ENCODE measurements at regions of chr5 and their contacts with region 1.

Region 1: DNA sequence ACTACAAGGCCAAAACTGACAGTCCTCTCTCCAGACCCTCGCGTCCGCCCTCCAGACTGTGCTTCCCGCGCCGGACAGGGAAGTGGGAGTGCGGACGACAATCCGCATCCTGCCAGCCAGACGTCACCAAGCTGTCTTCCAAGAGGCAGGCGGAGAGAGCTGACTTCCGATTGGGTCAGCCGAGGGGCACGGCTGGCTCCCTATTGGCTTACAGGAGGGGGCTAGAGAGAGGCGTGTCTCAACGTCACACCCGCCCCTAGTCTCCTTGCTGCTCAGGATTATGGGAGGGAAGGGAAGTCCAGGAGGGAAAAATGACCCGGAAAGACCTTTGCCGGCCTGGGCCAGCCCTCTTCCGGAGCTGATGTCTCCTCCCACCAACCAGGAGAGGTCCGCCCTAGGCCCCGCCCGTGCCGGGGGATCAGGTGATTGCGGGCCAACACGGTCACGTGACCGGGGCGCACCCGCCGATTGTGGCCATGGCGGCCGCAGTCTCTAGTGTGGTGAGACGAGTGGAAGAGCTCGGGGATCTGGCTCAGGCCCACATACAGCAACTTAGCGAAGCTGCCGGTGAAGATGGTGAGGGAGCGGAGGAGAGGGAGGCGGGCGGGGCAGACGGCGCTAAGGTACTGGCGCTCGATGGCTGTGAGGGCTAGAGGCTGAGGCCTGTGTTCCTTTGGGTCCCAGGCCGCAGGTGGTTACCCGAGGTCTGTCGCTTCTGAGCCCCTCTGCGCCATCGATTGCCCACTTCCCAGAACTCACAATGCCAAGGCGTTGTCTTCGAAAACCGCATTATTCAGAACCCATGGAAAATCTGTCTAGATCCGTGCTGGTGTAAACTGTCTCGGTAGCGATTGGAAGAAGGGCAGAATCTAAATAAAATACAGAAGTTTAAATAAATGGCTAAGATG is at the start of gene RIMOC1:
- DNase-seq: peak; percentile 98 to 99
- ATAC-seq: peak; percentile 98 to 99
- H3K4me3 ChIP-seq: peak within 1 kb of the TSS; percentile 80 to 88 (median 84)
- H3K27ac ChIP-seq: peak within 1 kb of the TSS; percentile 89 to 95 (median 93)
- H3K4me1 ChIP-seq: peaks cover 27 to 46% of the 10 kb centered on the region in 2 donors
- H3K27me3 ChIP-seq: no peaks in the 10 kb centered on the region
- CTCF ChIP-seq: peak in 2 of 5 experiments; percentile 50 to 59
- POLR2A ChIP-seq: peak; percentile 85 to 95
- total RNA-seq, gene RIMOC1: 5.0 to 8.2 (median 6.2) TPM

Region 2: DNA sequence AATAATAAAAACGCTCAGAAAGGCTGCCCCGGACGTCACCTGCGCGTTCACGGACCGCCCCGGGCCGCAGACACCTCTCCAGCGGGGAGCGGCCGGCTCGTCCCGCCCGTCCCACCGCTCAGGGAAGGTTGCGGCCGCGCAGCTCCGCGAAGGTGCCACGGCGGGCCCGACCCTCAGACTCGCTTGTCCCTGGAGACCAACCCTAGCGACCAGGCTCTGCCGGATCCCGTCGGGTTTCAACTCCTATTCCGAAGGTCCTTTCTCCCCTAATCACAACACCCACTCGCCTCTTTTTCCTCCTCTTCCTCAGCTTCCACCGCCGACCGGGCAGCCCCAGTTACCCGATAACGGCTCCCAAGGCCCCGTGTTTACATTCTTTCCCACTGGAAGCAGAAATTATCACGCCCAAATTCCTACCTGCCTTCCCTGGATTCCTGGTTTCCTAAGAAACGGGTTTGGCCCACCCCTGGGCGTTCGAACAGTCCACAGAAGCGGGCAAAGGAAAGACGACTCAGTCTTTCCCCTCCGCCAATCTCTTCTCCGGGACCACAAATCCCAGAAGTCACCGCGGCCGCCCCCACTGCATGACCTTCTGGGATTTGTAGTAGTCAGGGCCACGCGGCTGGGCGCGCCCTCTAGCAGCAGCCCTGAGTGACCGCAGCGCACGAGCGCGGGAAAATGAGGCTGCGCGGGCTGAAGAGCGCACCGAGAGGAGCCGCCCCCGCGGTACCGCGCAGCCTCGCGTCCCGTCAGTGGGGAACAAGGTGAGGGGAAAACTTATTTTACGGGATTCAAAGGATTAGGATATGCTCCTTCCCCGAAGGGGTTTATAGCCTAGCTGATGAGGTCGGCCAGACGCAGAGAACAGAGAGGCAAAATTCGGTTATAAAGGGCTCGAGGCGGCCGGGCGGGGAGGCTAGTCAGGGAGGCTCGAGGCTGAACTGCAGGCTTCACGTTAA is 1148.5 kb before region 1 on chr5 and contains the start of gene TTC33:
- in situ Hi-C with region 1: no loop called
- intact Hi-C with region 1: loop called (anchors 1 kb)
- DNase-seq: peak; percentile 94
- ATAC-seq: peak; percentile 96
- H3K4me3 ChIP-seq: peak within 1 kb of the TSS; percentile 82 to 98 (median 85)
- H3K27ac ChIP-seq: peak within 1 kb of the TSS; percentile 91 to 95 (median 92)
- H3K4me1 ChIP-seq: peaks cover 10% of the 10 kb centered on the region in 2 donors
- H3K27me3 ChIP-seq: no peaks in the 10 kb centered on the region
- CTCF ChIP-seq: peak; percentile 25 to 75 (median 60)
- POLR2A ChIP-seq: peak; percentile 61
- total RNA-seq, gene TTC33: 20.2 to 49.0 (median 32.6) TPM

Region 3: DNA sequence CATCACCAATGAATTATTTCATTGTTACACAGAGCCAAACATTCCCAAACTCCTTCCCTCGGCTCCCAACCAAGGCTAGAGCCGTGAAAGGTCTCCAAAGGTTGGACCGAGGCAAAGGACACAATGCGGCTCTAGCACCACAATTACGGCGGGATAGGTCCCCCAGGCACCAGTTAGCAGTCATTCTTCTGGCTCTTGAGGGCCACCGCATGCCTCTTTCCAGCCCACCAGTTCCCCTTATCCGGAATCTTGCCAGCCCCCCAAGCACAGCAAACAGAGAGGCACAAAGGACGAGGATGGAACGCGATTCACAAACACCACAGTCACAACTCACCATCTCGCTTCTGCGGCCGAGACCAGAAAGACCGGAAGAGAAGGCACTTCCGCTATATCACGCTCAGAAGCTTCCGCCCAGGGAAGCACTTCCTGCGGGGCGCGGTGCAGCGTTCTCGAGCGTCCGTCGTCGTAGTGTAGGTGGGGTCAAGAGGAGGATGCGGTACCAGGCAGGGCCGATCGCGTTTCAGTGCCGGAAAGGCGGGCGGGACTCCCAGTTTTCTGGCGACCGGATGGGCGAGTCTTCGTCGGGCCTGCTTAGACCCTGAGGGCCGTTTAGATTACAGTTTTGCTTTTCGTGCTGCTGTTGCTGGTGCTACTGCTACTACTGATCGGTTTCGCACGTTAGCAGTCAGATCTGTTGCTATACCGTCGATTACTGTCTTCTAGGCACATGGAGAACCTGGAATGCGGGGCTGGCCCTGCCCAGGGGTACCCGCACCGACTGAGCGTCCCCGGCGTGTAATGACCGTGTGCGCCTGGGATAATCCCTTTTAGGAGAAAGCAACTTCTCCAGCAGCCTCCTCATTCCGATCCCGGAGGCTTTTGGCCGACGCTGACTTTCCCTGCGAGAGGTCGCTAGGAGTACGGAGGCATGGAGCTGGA is 1069.0 kb before region 1 on chr5 and contains the start of gene RPL37:
- in situ Hi-C with region 1: no loop called
- intact Hi-C with region 1: loop called (anchors 10 kb)
- DNase-seq: peak; percentile 95 to 96
- ATAC-seq: peak; percentile 98 to 99
- H3K4me3 ChIP-seq: peak within 1 kb of the TSS; percentile 73 to 95 (median 82)
- H3K27ac ChIP-seq: peak within 1 kb of the TSS; percentile 85 to 97 (median 94)
- H3K4me1 ChIP-seq: peaks cover 27% of the 10 kb centered on the region in 2 donors
- H3K27me3 ChIP-seq: no peaks in the 10 kb centered on the region
- CTCF ChIP-seq: peak in 1 of 5 experiments; percentile 8
- POLR2A ChIP-seq: peak; percentile 87 to 89
- total RNA-seq, gene RPL37: 42.4 to 155 (median 92.9) TPM

Region 4: GRCh38 chr5:41083306-41083705 is 820.8 kb before region 1 on chr5:
- in situ Hi-C with region 1: no loop called
- intact Hi-C with region 1: no loop called
- DNase-seq: no peak
- ATAC-seq: no peak
- H3K4me3 ChIP-seq: no peak overlapping the region
- H3K27ac ChIP-seq: no peak overlapping the region
- H3K4me1 ChIP-seq: no peaks in the 10 kb centered on the region
- H3K27me3 ChIP-seq: no peaks in the 10 kb centered on the region
- CTCF ChIP-seq: no peak
- POLR2A ChIP-seq: no peak

Region 5: DNA sequence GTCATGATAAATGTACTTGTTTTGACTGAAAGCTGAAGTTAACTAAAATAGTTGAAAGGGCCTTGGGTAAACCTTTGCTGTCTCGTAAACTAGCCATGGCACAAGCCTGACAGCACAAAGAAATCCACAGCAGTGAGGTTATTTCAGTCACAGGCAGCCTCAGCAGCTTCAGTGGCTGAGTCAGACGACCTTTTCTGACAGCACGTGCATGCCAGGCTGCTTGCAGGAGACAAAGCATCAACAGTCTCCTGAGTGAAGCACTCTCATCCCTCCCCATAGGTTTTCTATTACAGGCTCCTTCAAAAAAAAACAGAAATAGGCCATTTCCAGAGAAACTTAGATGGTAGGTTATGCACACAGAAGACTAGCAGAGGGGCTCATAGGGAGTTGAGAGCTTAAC is 68.5 kb before region 1 on chr5:
- in situ Hi-C with region 1: no loop called
- intact Hi-C with region 1: loop called (anchors 1 kb)
- DNase-seq: peak; percentile 72 to 81
- ATAC-seq: peak; percentile 99 to 100
- H3K4me3 ChIP-seq: no peak overlapping the region
- H3K27ac ChIP-seq: peak overlapping the region; percentile 70 to 86 (median 74)
- H3K4me1 ChIP-seq: peaks cover 11 to 13% of the 10 kb centered on the region in 2 donors
- H3K27me3 ChIP-seq: no peaks in the 10 kb centered on the region
- CTCF ChIP-seq: no peak
- POLR2A ChIP-seq: peak in 1 of 2 donors; percentile 22

Region 6: DNA sequence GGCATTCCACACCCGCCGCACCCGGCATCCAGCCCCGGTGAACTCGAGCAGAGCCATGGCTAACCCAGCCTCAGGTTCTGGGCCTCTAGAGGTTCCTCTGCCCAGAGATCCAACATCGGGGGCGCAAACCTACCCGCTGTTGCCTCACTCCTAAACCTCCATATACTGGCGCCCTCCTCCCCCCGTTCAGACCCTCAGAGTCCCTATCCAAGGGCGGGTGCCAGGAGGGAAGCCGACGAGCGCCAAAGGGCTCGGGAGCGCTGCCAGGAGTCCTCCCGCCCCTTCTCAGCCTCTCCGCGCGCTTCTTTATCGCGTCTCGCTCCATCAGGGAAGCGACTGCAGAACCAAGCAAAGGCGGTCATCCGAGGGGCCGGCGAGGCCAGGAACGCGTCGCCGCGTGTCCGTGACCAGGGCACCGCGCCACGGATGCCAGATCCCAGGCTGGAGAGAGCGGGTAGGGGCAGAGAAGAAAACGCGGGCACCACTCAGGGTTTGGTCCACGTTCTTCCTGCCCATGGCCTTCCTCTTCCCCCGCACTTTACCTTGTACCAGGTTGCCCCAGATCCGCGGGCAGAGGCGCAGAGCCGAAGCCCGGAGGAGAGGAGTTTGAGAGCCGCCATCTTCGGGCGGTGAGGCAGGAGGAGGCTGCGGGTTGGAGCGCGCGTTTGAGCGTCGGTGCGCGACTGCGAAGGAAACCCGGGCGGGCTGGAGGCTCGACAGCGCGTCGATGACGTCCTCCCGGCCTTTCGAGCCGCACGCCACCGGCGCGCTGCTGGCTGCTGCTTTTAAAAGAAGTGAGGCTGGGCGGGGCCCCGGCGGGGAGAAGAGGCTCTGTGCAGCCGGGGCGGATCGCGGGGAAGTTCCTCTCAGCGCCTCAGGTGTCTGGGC is 34.2 kb before region 1 on chr5 and contains the start of gene OXCT1:
- in situ Hi-C with region 1: no loop called
- intact Hi-C with region 1: loop called (anchors 2 kb)
- DNase-seq: peak; percentile 38 to 62
- ATAC-seq: peak; percentile 71 to 80
- H3K4me3 ChIP-seq: peak within 1 kb of the TSS; percentile 74 to 87 (median 84)
- H3K27ac ChIP-seq: peak within 1 kb of the TSS; percentile 80 to 89 (median 86)
- H3K4me1 ChIP-seq: peaks cover 7 to 11% of the 10 kb centered on the region in 2 donors
- H3K27me3 ChIP-seq: no peaks in the 10 kb centered on the region
- CTCF ChIP-seq: no peak
- POLR2A ChIP-seq: peak; percentile 62 to 81
- total RNA-seq, gene OXCT1: 9.4 to 45.4 (median 20.5) TPM

Region 7: DNA sequence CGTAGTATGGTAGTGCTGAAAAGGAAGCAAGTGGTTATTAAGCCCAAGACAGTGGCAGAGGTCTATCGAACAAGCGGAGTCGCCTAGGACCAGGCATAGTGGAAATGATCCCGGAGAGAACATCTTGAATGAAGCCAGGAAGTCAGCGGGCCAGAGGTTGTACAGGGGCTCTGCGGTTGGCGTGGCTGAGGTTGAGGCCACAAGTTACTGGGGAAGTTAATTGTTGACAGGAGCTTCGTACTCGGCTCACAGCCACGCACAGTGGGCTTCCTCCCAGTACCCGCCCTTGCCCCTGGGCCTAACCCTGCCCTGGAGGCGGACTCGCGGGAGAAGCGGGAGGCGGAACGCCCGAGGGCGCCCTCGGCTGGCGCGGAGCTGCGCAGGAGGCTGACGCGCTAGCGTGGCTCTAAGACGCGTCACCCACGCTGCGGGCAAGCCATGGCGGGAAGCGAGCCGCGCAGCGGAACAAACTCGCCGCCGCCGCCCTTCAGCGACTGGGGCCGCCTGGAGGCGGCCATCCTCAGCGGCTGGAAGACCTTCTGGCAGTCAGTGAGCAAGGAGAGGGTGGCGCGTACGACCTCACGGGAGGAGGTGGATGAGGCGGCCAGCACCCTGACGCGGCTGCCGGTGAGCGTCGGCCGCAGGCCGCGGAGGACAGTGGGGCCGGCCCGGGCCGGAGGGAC is 20.9 kb after region 1 on chr5 and contains the start of gene FBXO4:
- in situ Hi-C with region 1: no loop called
- intact Hi-C with region 1: loop called (anchors 1 kb)
- DNase-seq: peak; percentile 67 to 78
- ATAC-seq: peak; percentile 93 to 94
- H3K4me3 ChIP-seq: peak within 1 kb of the TSS; percentile 61 to 97 (median 84)
- H3K27ac ChIP-seq: peak within 1 kb of the TSS; percentile 86 to 97 (median 90)
- H3K4me1 ChIP-seq: peaks cover 0 to 22% of the 10 kb centered on the region in 2 donors
- H3K27me3 ChIP-seq: no peaks in the 10 kb centered on the region
- CTCF ChIP-seq: peak; percentile 13 to 65 (median 51)
- POLR2A ChIP-seq: peak; percentile 34 to 48
- total RNA-seq, gene FBXO4: 1.8 to 4.7 (median 3.1) TPM

Region 8: DNA sequence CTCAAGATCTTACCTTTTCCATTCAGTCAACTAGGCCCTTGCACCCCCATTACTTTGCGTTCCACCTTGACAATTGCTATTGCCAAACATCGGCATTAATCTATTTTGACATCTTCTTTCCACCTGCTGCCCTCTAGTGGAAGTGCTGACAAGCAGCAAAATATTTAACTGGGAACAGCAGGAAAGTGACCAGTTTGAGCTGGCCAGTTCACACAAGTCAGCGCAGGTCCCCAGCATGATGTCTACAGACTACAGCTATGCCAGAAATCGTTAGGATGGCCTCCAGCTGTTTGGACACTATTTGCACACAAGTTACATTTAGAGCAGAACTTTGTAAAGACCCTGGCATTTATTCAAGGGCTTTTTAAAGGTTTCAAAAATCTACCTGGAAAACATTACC is 679.2 kb after region 1 on chr5:
- in situ Hi-C with region 1: no loop called
- intact Hi-C with region 1: loop called (anchors 10 kb)
- DNase-seq: peak; percentile 53 to 70
- ATAC-seq: peak; percentile 23 to 45
- H3K4me3 ChIP-seq: no peak overlapping the region
- H3K27ac ChIP-seq: peak overlapping the region; percentile 78 to 84 (median 80)
- H3K4me1 ChIP-seq: peaks cover 61 to 63% of the 10 kb centered on the region in 2 donors
- H3K27me3 ChIP-seq: no peaks in the 10 kb centered on the region
- CTCF ChIP-seq: peak; percentile 79 to 87 (median 83)
- POLR2A ChIP-seq: no peak